Heart left ventricle (tissue), 16 donors: ENCODE measurements at regions of chr17 and their contacts with region 1.

Region 1: GRCh38 chr17:32936894-32937500 is 9.0 kb downstream of the TMEM98 start:
- DNase-seq: peak; percentile 44 to 74 (median 55)
- ATAC-seq: peak in 3 of 4 donors; percentile 65 to 81 (median 71)
- H3K4me3 ChIP-seq: no peak overlapping the region
- H3K27ac ChIP-seq: no peak overlapping the region
- H3K4me1 ChIP-seq: peaks cover 0 to 10% (median 1%) of the 10 kb centered on the region in 12 donors
- H3K27me3 ChIP-seq: peaks cover 0 to 4% (median 0%) of the 10 kb centered on the region in 9 donors
- CTCF ChIP-seq: peak; percentile 60 to 82 (median 72)
- POLR2A ChIP-seq: no peak

Region 2: GRCh38 chr17:32997753-32998632 is 61.0 kb after region 1 on chr17:
- intact Hi-C with region 1: loop called in 1 of 10 experiments (anchors 10 kb)
- DNase-seq: peak; percentile 60 to 82 (median 73)
- ATAC-seq: peak in 3 of 4 donors; percentile 56 to 84 (median 67)
- H3K4me3 ChIP-seq: no peak overlapping the region
- H3K27ac ChIP-seq: no peak overlapping the region
- H3K4me1 ChIP-seq: peaks cover 0 to 7% (median 0%) of the 10 kb centered on the region in 12 donors
- H3K27me3 ChIP-seq: peaks cover 0 to 38% (median 3%) of the 10 kb centered on the region in 9 donors
- CTCF ChIP-seq: peak; percentile 75 to 92 (median 85)
- POLR2A ChIP-seq: no peak